CD4-positive, alpha-beta T cell (primary cell): ENCODE measurements at regions of chr4 and their contacts with region 1.

Region 1: GRCh38 chr4:77385124-77385969 is 220.3 kb upstream of the CXCL13 start:
- DNase-seq: peak; percentile 16 to 64 (median 30)
- ATAC-seq: no peak
- H3K4me3 ChIP-seq: no peak overlapping the region
- H3K4me3 Mint-ChIP-seq: no peak overlapping the region
- H3K27ac ChIP-seq: no peak overlapping the region
- H3K27ac Mint-ChIP-seq: no peak overlapping the region
- H3K4me1 ChIP-seq: no peaks in the 10 kb centered on the region
- H3K4me1 Mint-ChIP-seq: no peaks in the 10 kb centered on the region
- H3K27me3 ChIP-seq: no peaks in the 10 kb centered on the region
- H3K27me3 Mint-ChIP-seq: peaks cover 4% of the 10 kb centered on the region
- CTCF ChIP-seq: peak; percentile 71

Region 2: DNA sequence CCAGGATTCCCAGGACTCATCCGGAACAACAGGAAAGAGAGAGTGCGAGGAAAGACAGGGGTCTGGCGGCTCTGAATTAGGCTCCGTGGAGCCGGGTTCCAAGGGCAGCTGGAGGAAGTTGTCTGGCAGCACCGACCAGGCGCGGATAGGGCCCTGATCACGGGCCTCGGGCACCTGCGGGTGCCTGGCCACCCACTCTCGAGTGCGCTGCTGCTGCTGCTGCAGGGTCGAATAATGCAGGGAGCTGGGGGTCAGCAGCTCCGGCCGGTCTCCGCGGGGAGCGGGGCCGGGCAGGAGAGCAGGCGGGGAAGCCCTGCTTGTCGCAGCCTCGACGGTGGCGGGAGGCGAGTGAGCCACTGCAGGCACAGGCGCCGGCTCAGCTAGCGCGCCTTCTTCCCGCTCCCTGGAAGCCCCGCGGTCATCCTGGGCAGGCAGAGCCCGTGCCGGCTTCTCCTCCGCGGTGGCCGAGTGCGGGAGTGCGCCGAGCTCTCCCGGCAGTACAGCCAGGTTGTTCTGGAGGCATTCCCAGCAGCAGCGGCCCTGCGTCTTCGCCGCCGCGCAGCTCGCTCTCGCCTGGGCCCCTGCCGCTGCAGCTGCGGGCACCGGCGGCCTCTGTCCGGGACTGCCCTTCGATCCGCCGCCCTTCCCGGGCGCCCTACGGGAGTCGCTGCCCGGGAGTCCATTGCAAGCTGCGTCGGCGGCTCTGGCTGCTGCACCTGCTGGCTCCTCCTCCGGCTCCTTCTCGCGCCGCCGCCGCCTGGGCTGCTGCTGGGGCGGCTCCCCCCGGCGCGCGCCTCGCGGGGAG is 488.4 kb before region 1 on chr4:
- CTCF ChIA-PET with region 1: no interaction called
- POLR2A ChIA-PET with region 1: no interaction called
- intact Hi-C with region 1: no loop called
- DNase-seq: peak in 11 of 14 experiments; percentile 12 to 61 (median 28)
- ATAC-seq: peak; percentile 74
- H3K4me3 ChIP-seq: peak overlapping the region; percentile 59
- H3K4me3 Mint-ChIP-seq: no peak overlapping the region
- H3K27ac ChIP-seq: no peak overlapping the region
- H3K27ac Mint-ChIP-seq: no peak overlapping the region
- H3K4me1 ChIP-seq: peaks cover 15% of the 10 kb centered on the region
- H3K4me1 Mint-ChIP-seq: peaks cover 13% of the 10 kb centered on the region
- H3K27me3 ChIP-seq: peaks cover 36 to 41% of the 10 kb centered on the region in 2 experiments
- H3K27me3 Mint-ChIP-seq: peaks cover 54% of the 10 kb centered on the region
- CTCF ChIP-seq: no peak

Region 3: DNA sequence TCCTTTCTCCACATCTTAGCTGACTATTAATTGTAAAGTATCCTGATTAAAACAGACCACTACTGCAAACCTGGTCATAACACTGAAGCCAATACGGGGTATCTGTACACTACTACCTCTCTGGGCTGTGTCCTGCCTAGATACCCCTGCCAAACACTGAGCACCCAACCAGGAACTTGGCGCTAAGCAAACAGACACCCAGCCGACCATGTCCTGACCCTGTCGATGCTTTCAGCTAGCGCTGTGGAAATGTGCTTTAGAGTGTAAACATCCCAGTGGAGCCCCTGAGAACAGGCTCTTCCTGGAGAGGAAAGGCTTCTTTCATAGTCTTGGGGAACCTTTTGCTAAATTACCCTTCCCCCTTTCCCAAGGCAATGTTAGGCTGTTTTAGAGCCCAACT is 175.4 kb before region 1 on chr4:
- CTCF ChIA-PET with region 1: no interaction called
- POLR2A ChIA-PET with region 1: no interaction called
- intact Hi-C with region 1: no loop called
- DNase-seq: no peak
- ATAC-seq: no peak
- H3K4me3 ChIP-seq: no peak overlapping the region
- H3K4me3 Mint-ChIP-seq: no peak overlapping the region
- H3K27ac ChIP-seq: no peak overlapping the region
- H3K27ac Mint-ChIP-seq: no peak overlapping the region
- H3K4me1 ChIP-seq: no peaks in the 10 kb centered on the region
- H3K4me1 Mint-ChIP-seq: no peaks in the 10 kb centered on the region
- H3K27me3 ChIP-seq: no peaks in the 10 kb centered on the region
- H3K27me3 Mint-ChIP-seq: no peaks in the 10 kb centered on the region
- CTCF ChIP-seq: no peak

Region 4: DNA sequence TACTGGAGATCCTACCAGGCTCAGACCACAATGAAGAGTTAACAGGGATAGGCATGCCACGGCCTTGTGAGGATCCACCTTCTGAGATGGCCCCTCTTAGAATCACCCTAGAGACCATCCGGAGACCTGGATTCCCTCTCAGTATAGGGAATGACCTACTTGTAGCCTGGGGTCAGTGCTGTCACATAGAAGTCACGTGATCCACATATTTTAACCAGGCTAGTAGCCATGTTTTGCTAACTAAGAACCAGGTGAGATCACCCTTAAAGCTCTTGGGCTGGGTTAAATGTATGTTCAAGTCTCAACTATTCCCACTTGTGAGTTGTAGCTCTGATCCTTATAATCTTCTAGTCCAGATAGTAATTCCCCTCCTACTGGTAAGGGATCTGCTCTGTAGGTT is 13.0 kb before region 1 on chr4:
- CTCF ChIA-PET with region 1: no interaction called
- POLR2A ChIA-PET with region 1: no interaction called
- intact Hi-C with region 1: no loop called
- DNase-seq: no peak
- ATAC-seq: no peak
- H3K4me3 ChIP-seq: no peak overlapping the region
- H3K4me3 Mint-ChIP-seq: no peak overlapping the region
- H3K27ac ChIP-seq: no peak overlapping the region
- H3K27ac Mint-ChIP-seq: no peak overlapping the region
- H3K4me1 ChIP-seq: no peaks in the 10 kb centered on the region
- H3K4me1 Mint-ChIP-seq: no peaks in the 10 kb centered on the region
- H3K27me3 ChIP-seq: no peaks in the 10 kb centered on the region
- H3K27me3 Mint-ChIP-seq: no peaks in the 10 kb centered on the region
- CTCF ChIP-seq: no peak

Region 5: DNA sequence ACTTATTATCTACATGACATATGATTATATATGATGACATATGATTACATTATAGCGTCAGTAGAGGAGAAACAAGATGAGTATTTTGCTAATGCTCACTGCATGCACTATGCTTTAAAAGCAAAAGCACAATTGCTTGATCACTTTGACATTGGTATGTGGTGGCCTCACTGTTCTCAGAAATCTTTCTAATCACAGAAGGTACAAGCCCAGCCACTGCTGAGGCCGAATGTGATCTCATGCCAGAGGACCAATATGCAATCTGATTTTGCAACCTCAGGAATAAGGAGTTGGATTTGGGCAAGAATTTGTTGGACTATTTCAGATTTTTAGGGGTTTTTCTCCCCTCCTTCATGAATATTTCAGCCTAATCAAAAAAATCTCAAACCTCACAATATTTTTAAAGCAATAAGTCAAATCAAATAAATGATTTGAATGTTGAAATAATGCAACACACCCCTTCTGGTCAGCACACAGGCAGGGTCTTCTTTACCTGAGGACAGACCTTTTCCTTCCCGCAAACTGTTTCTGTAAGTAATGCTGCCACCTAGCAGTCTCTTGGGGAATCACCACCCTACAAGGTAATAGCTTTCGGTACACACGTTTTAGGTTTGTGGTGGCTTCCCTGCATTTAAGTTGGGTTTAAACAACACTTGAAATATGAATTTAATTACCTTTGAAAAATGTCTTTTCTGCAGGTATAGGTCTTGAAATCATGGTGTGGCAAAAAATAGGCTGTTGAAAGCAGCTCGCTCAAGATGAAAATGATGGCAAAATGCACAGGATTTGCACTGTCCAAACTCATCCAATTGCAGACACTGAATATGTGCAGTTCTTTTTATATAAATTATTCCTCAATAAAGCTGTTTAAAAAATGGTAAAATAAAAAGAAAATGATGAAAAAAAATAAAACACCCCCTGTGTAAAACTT is 215.4 kb after region 1 on chr4:
- CTCF ChIA-PET with region 1: no interaction called
- POLR2A ChIA-PET with region 1: no interaction called
- intact Hi-C with region 1: loop called (anchors 5 kb)
- DNase-seq: peak in 7 of 14 experiments; percentile 2 to 49 (median 25)
- ATAC-seq: no peak
- H3K4me3 ChIP-seq: no peak overlapping the region
- H3K4me3 Mint-ChIP-seq: no peak overlapping the region
- H3K27ac ChIP-seq: no peak overlapping the region
- H3K27ac Mint-ChIP-seq: no peak overlapping the region
- H3K4me1 ChIP-seq: no peaks in the 10 kb centered on the region
- H3K4me1 Mint-ChIP-seq: peaks cover 8% of the 10 kb centered on the region
- H3K27me3 ChIP-seq: no peaks in the 10 kb centered on the region
- H3K27me3 Mint-ChIP-seq: peaks cover 6% of the 10 kb centered on the region
- CTCF ChIP-seq: peak; percentile 81

Region 6: GRCh38 chr4:77623091-77623490 is 237.7 kb after region 1 on chr4:
- CTCF ChIA-PET with region 1: no interaction called
- POLR2A ChIA-PET with region 1: no interaction called
- intact Hi-C with region 1: loop called in 1 of 2 experiments (anchors 5 kb)
- DNase-seq: no peak
- ATAC-seq: no peak
- H3K4me3 ChIP-seq: no peak overlapping the region
- H3K4me3 Mint-ChIP-seq: no peak overlapping the region
- H3K27ac ChIP-seq: no peak overlapping the region
- H3K27ac Mint-ChIP-seq: no peak overlapping the region
- H3K4me1 ChIP-seq: peaks cover 5% of the 10 kb centered on the region
- H3K4me1 Mint-ChIP-seq: peaks cover 6% of the 10 kb centered on the region
- H3K27me3 ChIP-seq: no peaks in the 10 kb centered on the region
- H3K27me3 Mint-ChIP-seq: peaks cover 7% of the 10 kb centered on the region
- CTCF ChIP-seq: no peak

Region 7: DNA sequence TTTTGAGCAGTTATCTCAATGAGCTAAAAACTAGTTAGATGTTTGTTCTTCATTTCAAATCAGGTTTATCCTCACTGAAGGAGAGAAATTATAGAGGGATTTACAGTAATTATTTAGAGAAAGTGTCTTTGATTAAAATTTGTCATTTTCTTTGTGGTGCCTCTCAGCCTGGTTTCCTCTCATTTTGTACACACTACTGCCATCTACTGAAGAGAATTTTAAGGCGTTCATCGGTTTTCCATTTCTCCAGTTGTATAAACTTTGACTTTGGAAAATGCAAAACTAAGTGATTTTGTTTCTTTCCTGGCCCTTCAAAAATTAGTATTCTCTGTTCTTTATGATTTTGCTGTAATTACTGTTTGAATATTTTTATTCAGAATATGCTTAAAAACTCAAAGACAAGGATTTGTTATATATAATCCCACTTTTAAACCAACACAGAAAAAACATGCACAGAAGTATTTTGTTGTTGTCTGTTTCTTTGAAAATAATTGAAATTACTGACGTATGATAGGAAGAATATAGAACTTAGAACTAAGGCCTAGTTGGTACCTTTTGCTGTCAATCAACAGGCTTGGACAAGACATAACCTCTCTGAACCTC is 1131.8 kb after region 1 on chr4:
- CTCF ChIA-PET with region 1: no interaction called
- POLR2A ChIA-PET with region 1: no interaction called
- intact Hi-C with region 1: loop called (anchors 5 kb)
- DNase-seq: peak in 2 of 14 experiments; percentile 3 to 7
- ATAC-seq: no peak
- H3K4me3 ChIP-seq: no peak overlapping the region
- H3K4me3 Mint-ChIP-seq: no peak overlapping the region
- H3K27ac ChIP-seq: no peak overlapping the region
- H3K27ac Mint-ChIP-seq: no peak overlapping the region
- H3K4me1 ChIP-seq: no peaks in the 10 kb centered on the region
- H3K4me1 Mint-ChIP-seq: no peaks in the 10 kb centered on the region
- H3K27me3 ChIP-seq: no peaks in the 10 kb centered on the region
- H3K27me3 Mint-ChIP-seq: no peaks in the 10 kb centered on the region
- CTCF ChIP-seq: peak; percentile 35